ENCODE measurements at regions of chr18 and their contacts with region 1.

Region 1: DNA sequence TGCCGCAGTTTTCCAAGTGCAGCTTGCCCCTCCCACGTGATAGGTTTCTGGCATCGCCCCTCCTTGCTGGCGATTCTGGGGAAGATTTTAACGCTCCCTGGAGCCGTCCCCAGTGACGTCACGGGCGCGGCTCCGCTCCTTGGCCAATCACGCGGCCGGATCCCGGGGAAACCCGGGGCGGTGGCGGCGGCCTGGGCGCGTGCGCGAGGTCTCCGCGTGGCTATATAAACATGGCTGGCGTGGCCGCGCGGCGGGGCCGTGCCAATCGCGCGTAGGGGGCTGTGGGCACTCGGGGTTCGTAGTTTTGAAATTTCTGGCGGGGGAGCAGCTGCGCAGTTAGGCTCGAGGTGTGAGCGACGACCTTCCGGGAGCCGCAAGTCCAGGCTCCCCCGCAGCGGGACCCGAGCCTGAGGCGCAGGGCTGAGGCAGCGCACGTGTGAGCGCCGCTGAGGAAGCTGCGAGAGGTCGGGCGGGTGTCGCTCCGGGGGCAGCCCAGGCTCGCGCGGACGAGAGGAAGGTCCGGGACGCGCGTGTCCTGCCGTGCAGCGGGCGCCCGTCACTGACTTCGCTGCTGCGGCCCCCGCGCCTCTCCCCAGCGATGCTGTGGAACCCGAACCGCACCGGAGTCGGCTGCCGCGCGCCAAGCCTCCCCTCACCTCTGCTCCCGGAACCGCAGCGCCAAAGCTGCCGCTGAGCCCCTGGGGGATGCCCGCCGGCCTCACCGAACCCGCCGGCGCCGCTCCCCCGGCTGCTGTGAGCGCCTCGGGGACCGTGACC is at the start of gene TAF4B:
- DNase-seq: peak; percentile 96 to 98
- ATAC-seq: peak; percentile 99
- H3K4me3 ChIP-seq: peak within 1 kb of the TSS; percentile 46 to 73
- H3K27ac ChIP-seq: no peak within 1 kb of the TSS
- H3K4me1 ChIP-seq: no peaks in the 10 kb centered on the region
- H3K27me3 ChIP-seq: no peaks in the 10 kb centered on the region
- total RNA-seq, gene TAF4B: 3.9 to 4.2 TPM

Region 2: GRCh38 chr18:26090130-26091046 is 136.0 kb before region 1 on chr18 and contains the start of gene SS18:
- intact Hi-C with region 1: loop called (anchors 5 kb)
- DNase-seq: peak; percentile 97 to 98
- ATAC-seq: peak; percentile 98
- H3K4me3 ChIP-seq: peak within 1 kb of the TSS; percentile 43 to 87
- H3K27ac ChIP-seq: peak within 1 kb of the TSS; percentile 91 to 95
- H3K4me1 ChIP-seq: no peaks in the 10 kb centered on the region
- H3K27me3 ChIP-seq: no peaks in the 10 kb centered on the region
- total RNA-seq, gene SS18: 70.8 to 81.3 TPM

Region 3: DNA sequence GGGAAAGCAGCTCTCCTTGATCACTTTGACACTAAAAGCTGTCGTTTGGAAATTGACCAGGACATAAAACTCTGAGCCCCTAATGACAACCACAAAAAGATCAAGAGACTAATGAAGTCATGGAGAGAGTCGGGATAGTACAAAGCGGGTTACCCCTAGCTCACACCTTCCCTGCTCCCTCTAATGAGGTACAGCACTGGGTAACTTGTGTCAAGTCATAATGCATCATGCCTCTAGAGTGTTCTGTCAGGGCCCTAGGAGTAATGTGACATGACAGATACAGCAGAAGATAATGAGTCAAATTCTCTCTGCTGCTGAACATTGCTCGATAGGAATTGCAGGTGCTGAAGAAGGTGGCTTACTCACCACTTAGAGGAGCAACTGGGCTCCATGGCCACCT is 508.3 kb after region 1 on chr18:
- intact Hi-C with region 1: no loop called
- DNase-seq: no peak
- ATAC-seq: no peak
- H3K4me3 ChIP-seq: no peak overlapping the region
- H3K27ac ChIP-seq: no peak overlapping the region
- H3K4me1 ChIP-seq: no peaks in the 10 kb centered on the region
- H3K27me3 ChIP-seq: no peaks in the 10 kb centered on the region

Measured in aorta (tissue), 5 donors.